ENCODE measurements at regions of chr2 and their contacts with region 1.

Region 1: GRCh38 chr2:8571792-8572499 is 109.9 kb upstream of the ID2 start:
- DNase-seq: no peak
- H3K27ac ChIP-seq: no peak overlapping the region
- CTCF ChIP-seq: no peak

Region 2: DNA sequence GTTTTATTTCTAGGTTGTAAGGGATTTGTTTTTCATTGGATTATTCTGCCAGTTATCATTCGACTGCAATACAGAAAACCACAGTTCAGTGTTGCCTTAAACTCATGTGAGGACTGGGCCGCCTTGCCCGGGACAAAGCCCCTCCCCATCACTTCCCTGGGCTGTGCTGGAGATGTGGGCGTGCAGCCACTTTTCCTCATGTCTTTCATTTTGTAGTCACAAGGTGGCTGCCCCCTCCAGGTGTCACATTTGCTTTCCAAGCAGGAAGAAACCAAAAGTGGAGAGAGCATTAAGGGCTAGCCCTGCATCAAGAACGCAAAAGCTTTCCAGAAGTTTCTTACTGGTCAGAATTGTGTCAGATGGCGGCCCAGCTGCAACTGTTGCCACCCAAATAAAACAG is 382.6 kb before region 1 on chr2:
- CTCF ChIA-PET with region 1: interaction called, 11 read pairs
- POLR2A ChIA-PET with region 1: no interaction called
- DNase-seq: no peak
- H3K27ac ChIP-seq: no peak overlapping the region
- CTCF ChIP-seq: no peak

Measured in RWPE1 (cell line).